ENCODE measurements at regions of chr11 and their contacts with region 1.

Region 1: DNA sequence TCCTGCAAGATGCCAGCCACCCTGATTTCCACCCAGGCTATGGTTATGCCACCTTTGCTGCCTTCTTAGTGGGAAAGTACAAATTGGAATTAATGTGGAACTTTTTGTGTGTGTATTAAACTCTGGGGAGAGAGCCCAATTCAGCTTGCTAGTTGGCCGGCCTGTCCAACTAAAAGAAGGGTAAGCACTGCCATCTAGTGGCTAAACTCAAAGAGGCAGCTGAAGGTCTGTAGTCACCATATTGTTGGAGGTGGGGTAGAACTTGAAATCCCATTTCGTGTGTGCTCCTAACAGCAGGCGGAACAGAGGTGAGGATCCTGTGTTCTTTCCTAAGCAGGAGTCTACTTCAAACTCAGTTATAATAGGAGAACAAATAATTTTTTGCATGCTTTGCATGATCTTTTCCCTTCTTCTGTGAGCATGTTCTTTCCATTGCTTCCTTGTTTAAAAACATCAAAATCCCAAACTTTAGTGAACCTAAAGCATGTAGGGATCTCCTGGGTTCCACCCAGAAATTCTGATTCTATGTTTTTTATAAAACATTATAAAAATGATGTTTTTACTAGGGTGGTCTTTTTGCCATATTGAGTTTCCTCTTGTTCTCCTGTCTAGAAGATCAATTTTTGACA is 138.8 kb upstream of the SORL1-AS1 start:
- DNase-seq: peak; percentile 63 to 75 (median 70)
- ATAC-seq: peak; percentile 95
- H3K4me3 ChIP-seq: no peak overlapping the region
- H3K27ac ChIP-seq: no peak overlapping the region
- H3K4me1 ChIP-seq: peaks cover 0 to 2% of the 10 kb centered on the region in 2 experiments; a peak in 2 of 5 replicates
- H3K27me3 ChIP-seq: peaks cover 0 to 20% of the 10 kb centered on the region in 2 experiments; a peak in 4 of 5 replicates
- CTCF ChIP-seq: peak; percentile 73 to 85 (median 74)
- EP300 ChIP-seq: no peak
- POLR2A ChIP-seq: no peak
- RAD21 ChIP-seq: peak; percentile 75 to 84

Region 2: DNA sequence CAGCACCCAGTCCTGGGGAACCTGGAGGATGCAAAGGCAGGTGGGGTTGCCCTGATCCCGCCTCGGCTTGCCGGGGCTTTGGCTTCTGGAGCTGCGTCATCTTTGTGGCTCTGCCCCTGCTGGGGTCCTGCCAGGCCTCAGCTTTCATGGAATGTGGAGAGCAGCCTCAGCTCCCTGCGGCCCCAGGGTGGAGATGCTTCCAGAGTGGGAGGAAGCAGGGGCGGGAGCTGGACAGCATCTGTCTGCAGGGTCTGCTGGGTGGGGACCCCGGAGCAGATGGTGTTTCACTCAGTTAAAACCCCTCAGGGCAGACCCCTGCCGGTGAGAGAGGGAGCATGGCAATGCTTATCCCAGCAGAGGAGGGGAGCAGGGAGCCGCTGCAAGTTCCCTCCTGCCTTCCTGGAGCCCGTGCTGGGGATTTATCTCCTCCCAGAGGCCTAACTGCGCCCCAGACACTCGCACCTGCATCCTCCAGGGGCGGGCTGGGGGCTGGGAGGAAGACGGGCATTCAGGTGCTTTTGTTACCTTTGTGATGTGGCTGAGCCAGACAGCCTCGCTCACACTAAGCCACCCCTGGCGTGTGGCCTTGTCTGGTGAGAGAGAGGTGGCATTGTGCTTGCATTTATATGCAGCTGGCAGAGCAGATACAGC is 1064.3 kb before region 1 on chr11:
- CTCF ChIA-PET with region 1: no interaction called
- POLR2A ChIA-PET with region 1: no interaction called
- in situ Hi-C with region 1: loop called (anchors 10 kb)
- intact Hi-C with region 1: no loop called
- DNase-seq: no peak
- ATAC-seq: no peak
- H3K4me3 ChIP-seq: no peak overlapping the region
- H3K27ac ChIP-seq: no peak overlapping the region
- H3K4me1 ChIP-seq: no peaks in the 10 kb centered on the region
- H3K27me3 ChIP-seq: peaks cover 42 to 89% of the 10 kb centered on the region in 2 experiments; a peak in 4 of 5 replicates
- CTCF ChIP-seq: no peak
- EP300 ChIP-seq: no peak
- POLR2A ChIP-seq: no peak
- RAD21 ChIP-seq: no peak

Region 3: DNA sequence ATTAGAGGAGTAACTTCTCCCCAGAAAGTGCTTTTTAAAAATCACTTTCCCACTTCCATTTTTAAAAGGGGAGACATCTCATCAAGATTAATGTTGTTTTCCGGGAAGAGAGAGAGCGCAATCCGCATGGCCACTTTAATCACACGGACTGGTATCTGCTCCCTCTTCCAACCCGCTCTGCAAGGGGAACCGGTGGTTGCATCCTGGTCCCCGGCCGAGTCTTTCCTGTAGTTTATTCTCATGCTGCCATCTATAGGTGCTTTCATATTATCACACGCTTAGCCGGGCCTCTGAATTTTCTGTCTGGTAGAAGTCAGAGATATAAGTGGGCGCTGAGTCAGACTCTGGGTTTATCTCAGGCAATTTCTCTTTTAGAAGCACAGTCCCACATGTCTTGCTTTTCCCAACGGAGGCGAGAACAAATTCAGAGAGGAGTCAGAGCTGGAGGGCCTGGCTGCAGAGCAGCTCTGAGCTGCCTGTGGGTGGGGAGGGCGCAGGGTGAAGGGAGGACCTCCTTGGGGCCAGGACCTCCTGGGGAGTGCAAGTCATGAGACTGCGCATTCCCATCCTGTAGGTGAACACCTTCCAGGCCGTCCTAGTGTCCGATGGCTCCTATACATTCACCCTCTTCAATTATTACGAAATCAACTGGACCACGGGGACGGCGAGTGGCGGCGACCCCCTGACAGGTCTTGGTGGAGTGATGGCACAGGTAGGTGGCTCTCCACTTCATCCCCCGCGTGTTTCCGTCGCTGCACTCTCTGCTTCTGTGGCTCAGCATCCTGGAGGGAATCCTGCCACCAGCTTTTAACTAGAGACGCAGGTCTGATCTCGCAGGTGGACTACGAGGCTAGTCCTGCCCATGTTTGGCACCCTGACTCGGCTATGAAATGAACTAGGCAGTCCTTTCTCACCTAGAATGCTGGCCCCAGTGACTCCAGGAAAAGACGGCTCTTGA is 478.7 kb before region 1 on chr11:
- CTCF ChIA-PET with region 1: no interaction called
- POLR2A ChIA-PET with region 1: no interaction called
- in situ Hi-C with region 1: no loop called
- intact Hi-C with region 1: loop called (anchors 2 kb)
- DNase-seq: peak; percentile 22 to 57 (median 42)
- ATAC-seq: peak; percentile 93
- H3K4me3 ChIP-seq: no peak overlapping the region
- H3K27ac ChIP-seq: no peak overlapping the region
- H3K4me1 ChIP-seq: no peaks in the 10 kb centered on the region
- H3K27me3 ChIP-seq: peaks cover 5 to 16% of the 10 kb centered on the region in 2 experiments; a peak in 3 of 5 replicates
- CTCF ChIP-seq: peak; percentile 50 to 69 (median 50); a peak in 5 of 6 replicates
- EP300 ChIP-seq: no peak
- POLR2A ChIP-seq: no peak
- RAD21 ChIP-seq: peak; percentile 58 to 71

Region 4: DNA sequence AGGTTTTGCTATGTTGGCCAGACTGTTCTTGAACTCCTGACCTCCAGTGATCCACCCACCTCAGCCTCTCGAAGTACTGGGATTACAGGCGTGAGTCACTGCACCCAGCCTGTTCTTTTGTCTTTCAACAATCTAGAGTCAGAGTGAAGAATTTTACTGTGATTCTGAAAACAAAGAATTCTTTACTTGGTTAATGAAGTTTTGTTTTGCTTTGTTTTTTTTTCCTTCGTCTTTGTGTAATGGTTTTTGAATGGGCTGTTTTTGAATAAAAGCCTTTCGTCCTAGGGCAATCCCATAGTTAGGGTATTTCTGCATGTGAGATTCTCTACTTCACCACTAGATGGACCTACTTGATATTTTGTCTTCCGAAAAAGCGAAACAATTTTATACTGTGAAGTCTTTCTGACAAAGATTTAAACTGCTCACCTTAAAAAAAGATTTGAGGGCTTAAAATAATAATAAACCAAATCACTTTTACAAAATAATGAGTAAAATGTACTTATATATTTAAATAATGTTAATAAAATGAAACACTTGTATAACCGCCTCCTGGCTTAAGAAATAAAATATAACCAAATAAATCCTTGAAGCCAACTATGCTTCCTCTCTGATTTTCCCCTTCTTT is 342.4 kb before region 1 on chr11:
- CTCF ChIA-PET with region 1: interaction called, 5 read pairs
- POLR2A ChIA-PET with region 1: interaction called, 3 read pairs
- in situ Hi-C with region 1: loop called (anchors 10 kb)
- intact Hi-C with region 1: loop called (anchors 1 kb)
- DNase-seq: peak; percentile 21 to 46 (median 26)
- ATAC-seq: peak; percentile 70
- H3K4me3 ChIP-seq: no peak overlapping the region
- H3K27ac ChIP-seq: no peak overlapping the region
- H3K4me1 ChIP-seq: peaks cover 0 to 9% of the 10 kb centered on the region in 2 experiments; a peak in 2 of 5 replicates
- H3K27me3 ChIP-seq: peaks cover 0 to 10% of the 10 kb centered on the region in 2 experiments; a peak in 1 of 5 replicates
- CTCF ChIP-seq: peak; percentile 44 to 67 (median 48); a peak in 5 of 6 replicates
- EP300 ChIP-seq: no peak
- POLR2A ChIP-seq: no peak
- RAD21 ChIP-seq: peak; percentile 28 to 48; a peak in 2 of 4 replicates

Region 5: GRCh38 chr11:121451986-121452608 is 139.4 kb before region 1 on chr11 and contains the start of gene SORL1:
- CTCF ChIA-PET with region 1: no interaction called
- POLR2A ChIA-PET with region 1: no interaction called
- in situ Hi-C with region 1: no loop called
- intact Hi-C with region 1: loop called (anchors 10 kb)
- DNase-seq: peak; percentile 19 to 25 (median 24)
- ATAC-seq: peak; percentile 94
- H3K4me3 ChIP-seq: peak within 1 kb of the TSS; percentile 13; the same call in 1 of the 2 replicates
- H3K27ac ChIP-seq: no peak within 1 kb of the TSS
- H3K4me1 ChIP-seq: peaks cover 0 to 9% of the 10 kb centered on the region in 2 experiments; a peak in 2 of 5 replicates
- H3K27me3 ChIP-seq: peaks cover 12 to 36% of the 10 kb centered on the region in 2 experiments; a peak in 4 of 5 replicates
- CTCF ChIP-seq: peak; percentile 16 to 37 (median 19); a peak in 3 of 6 replicates
- EP300 ChIP-seq: no peak
- POLR2A ChIP-seq: no peak
- RAD21 ChIP-seq: no peak
- polyA plus RNA-seq, gene SORL1: 0.01 TPM in 1 of 2 experiments, not detected in the other

Region 6: GRCh38 chr11:121494355-121495099 is 97.0 kb before region 1 on chr11:
- CTCF ChIA-PET with region 1: no interaction called
- POLR2A ChIA-PET with region 1: no interaction called
- in situ Hi-C with region 1: no loop called
- intact Hi-C with region 1: no loop called
- DNase-seq: no peak
- ATAC-seq: no peak
- H3K4me3 ChIP-seq: no peak overlapping the region
- H3K27ac ChIP-seq: no peak overlapping the region
- H3K4me1 ChIP-seq: no peaks in the 10 kb centered on the region
- H3K27me3 ChIP-seq: no peaks in the 10 kb centered on the region
- CTCF ChIP-seq: no peak
- EP300 ChIP-seq: no peak
- POLR2A ChIP-seq: no peak
- RAD21 ChIP-seq: no peak